ENCODE measurements at regions of chr22 and their contacts with region 1.

Region 1: GRCh38 chr22:39532215-39533071 is at the start of gene RPS19BP1:
- DNase-seq: peak; percentile 99
- ATAC-seq: peak; percentile 83
- H3K4me3 ChIP-seq: peak within 1 kb of the TSS; percentile 97 to 100
- H3K27ac ChIP-seq: peak within 1 kb of the TSS; percentile 94
- H3K4me1 ChIP-seq: peaks cover 36 to 57% of the 10 kb centered on the region in 2 experiments
- H3K27me3 ChIP-seq: no peaks in the 10 kb centered on the region
- CTCF ChIP-seq: no peak
- POLR2A ChIP-seq: peak; percentile 80
- RAD21 ChIP-seq: no peak
- total RNA-seq, gene RPS19BP1: 80.4 TPM

Region 2: DNA sequence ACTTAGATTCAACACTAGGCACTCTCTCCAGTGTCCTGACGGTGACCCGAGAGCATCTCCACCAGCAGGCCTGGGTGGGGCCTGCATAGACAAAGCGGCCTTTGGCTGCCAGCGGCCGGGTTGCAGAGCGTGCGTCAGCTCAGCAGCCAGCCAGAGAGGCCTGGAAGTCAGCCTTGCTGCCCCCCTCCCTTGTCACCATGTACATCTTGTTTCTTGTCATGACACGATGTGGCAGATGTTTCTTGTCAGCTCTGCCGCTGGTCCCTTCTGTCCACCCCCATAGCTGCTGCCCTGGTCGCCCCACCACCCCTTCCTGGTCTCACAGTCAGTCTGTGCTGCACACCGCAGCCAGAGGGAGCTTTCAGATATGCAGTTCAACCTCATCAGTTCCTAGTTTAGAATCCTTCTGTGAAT is 346.8 kb before region 1 on chr22:
- CTCF ChIA-PET with region 1: no interaction called
- POLR2A ChIA-PET with region 1: no interaction called
- RAD21 ChIA-PET with region 1: no interaction called
- intact Hi-C with region 1: no loop called
- DNase-seq: no peak
- ATAC-seq: no peak
- H3K4me3 ChIP-seq: no peak overlapping the region
- H3K27ac ChIP-seq: no peak overlapping the region
- H3K4me1 ChIP-seq: peaks cover 0 to 20% of the 10 kb centered on the region in 2 experiments; a peak in 2 of 4 replicates
- H3K27me3 ChIP-seq: no peaks in the 10 kb centered on the region
- CTCF ChIP-seq: no peak
- POLR2A ChIP-seq: no peak
- RAD21 ChIP-seq: peak; percentile 52; the same call in 1 of the 2 replicates

Region 3: GRCh38 chr22:39395936-39396796 is 136.3 kb before region 1 on chr22:
- CTCF ChIA-PET with region 1: no interaction called
- POLR2A ChIA-PET with region 1: no interaction called
- RAD21 ChIA-PET with region 1: no interaction called
- intact Hi-C with region 1: loop called (anchors 2 kb)
- DNase-seq: no peak
- ATAC-seq: no peak
- H3K4me3 ChIP-seq: no peak overlapping the region
- H3K27ac ChIP-seq: no peak overlapping the region
- H3K4me1 ChIP-seq: peaks cover 0 to 11% of the 10 kb centered on the region in 2 experiments; a peak in 1 of 4 replicates
- H3K27me3 ChIP-seq: no peaks in the 10 kb centered on the region
- CTCF ChIP-seq: no peak
- POLR2A ChIP-seq: no peak
- RAD21 ChIP-seq: no peak

Region 4: GRCh38 chr22:39496131-39496838 is 36.2 kb before region 1 on chr22:
- CTCF ChIA-PET with region 1: interaction called, 86 read pairs
- POLR2A ChIA-PET with region 1: interaction called, 6 read pairs
- RAD21 ChIA-PET with region 1: interaction called in 1 of 2 experiments, 5 read pairs
- intact Hi-C with region 1: loop called (anchors 1 kb)
- DNase-seq: peak; percentile 56
- ATAC-seq: peak; percentile 86
- H3K4me3 ChIP-seq: no peak overlapping the region
- H3K27ac ChIP-seq: peak overlapping the region; percentile 43
- H3K4me1 ChIP-seq: peaks cover 14 to 41% of the 10 kb centered on the region in 2 experiments
- H3K27me3 ChIP-seq: no peaks in the 10 kb centered on the region
- CTCF ChIP-seq: peak; percentile 70 to 92 (median 90)
- POLR2A ChIP-seq: no peak
- RAD21 ChIP-seq: peak; percentile 38; the same call in 1 of the 2 replicates

Region 5: GRCh38 chr22:39520054-39520891 is 12.2 kb before region 1 on chr22 and contains the start of gene ATF4:
- CTCF ChIA-PET with region 1: interaction called, 13 read pairs
- POLR2A ChIA-PET with region 1: interaction called, 20 read pairs
- RAD21 ChIA-PET with region 1: interaction called in 1 of 2 experiments, 3 read pairs
- intact Hi-C with region 1: no loop called
- DNase-seq: peak; percentile 99
- ATAC-seq: peak; percentile 81
- H3K4me3 ChIP-seq: peak within 1 kb of the TSS; percentile 85 to 92
- H3K27ac ChIP-seq: peak within 1 kb of the TSS; percentile 99
- H3K4me1 ChIP-seq: peaks cover 17 to 41% of the 10 kb centered on the region in 2 experiments
- H3K27me3 ChIP-seq: no peaks in the 10 kb centered on the region
- CTCF ChIP-seq: no peak
- POLR2A ChIP-seq: peak; percentile 98
- RAD21 ChIP-seq: no peak
- total RNA-seq, gene ATF4: 608 TPM

Region 6: GRCh38 chr22:39932918-39933649 is 400.6 kb after region 1 on chr22:
- CTCF ChIA-PET with region 1: interaction called, 6 read pairs
- POLR2A ChIA-PET with region 1: no interaction called
- RAD21 ChIA-PET with region 1: no interaction called
- intact Hi-C with region 1: loop called (anchors 10 kb)
- DNase-seq: peak; percentile 35
- ATAC-seq: peak; percentile 81
- H3K4me3 ChIP-seq: no peak overlapping the region
- H3K27ac ChIP-seq: no peak overlapping the region
- H3K4me1 ChIP-seq: no peaks in the 10 kb centered on the region
- H3K27me3 ChIP-seq: peaks cover 87% of the 10 kb centered on the region
- CTCF ChIP-seq: peak; percentile 65 to 95 (median 89); a peak in 5 of 6 replicates
- POLR2A ChIP-seq: no peak
- RAD21 ChIP-seq: peak; percentile 63

Region 7: GRCh38 chr22:40036591-40037225 is 504.3 kb after region 1 on chr22:
- CTCF ChIA-PET with region 1: interaction called, 20 read pairs
- POLR2A ChIA-PET with region 1: no interaction called
- RAD21 ChIA-PET with region 1: interaction called in 1 of 2 experiments, 4 read pairs
- intact Hi-C with region 1: loop called (anchors 2 kb)
- DNase-seq: peak; percentile 62
- ATAC-seq: peak; percentile 94
- H3K4me3 ChIP-seq: no peak overlapping the region
- H3K27ac ChIP-seq: no peak overlapping the region
- H3K4me1 ChIP-seq: no peaks in the 10 kb centered on the region
- H3K27me3 ChIP-seq: no peaks in the 10 kb centered on the region
- CTCF ChIP-seq: peak; percentile 70 to 87 (median 84)
- POLR2A ChIP-seq: no peak
- RAD21 ChIP-seq: peak; percentile 93

Region 8: GRCh38 chr22:40346178-40347118 is 814.0 kb after region 1 on chr22 and contains the start of gene ADSL:
- CTCF ChIA-PET with region 1: interaction called, 4 read pairs
- POLR2A ChIA-PET with region 1: interaction called, 3 read pairs
- RAD21 ChIA-PET with region 1: no interaction called
- intact Hi-C with region 1: loop called (anchors 5 kb)
- DNase-seq: peak; percentile 47
- ATAC-seq: peak; percentile 92
- H3K4me3 ChIP-seq: peak within 1 kb of the TSS; percentile 72 to 96
- H3K27ac ChIP-seq: peak within 1 kb of the TSS; percentile 92
- H3K4me1 ChIP-seq: peaks cover 8 to 17% of the 10 kb centered on the region in 2 experiments; a peak in 3 of 4 replicates
- H3K27me3 ChIP-seq: no peaks in the 10 kb centered on the region
- CTCF ChIP-seq: no peak
- POLR2A ChIP-seq: peak; percentile 97
- RAD21 ChIP-seq: 0 out of 2 replicates have a peak, but pooled peaks have one; percentile 4
- total RNA-seq, gene ADSL: 126 TPM

Measured in HCT116 (cell line).